CD8-positive, alpha-beta T cell (primary cell): ENCODE measurements at regions of chr12 and their contacts with region 1.

Region 1: DNA sequence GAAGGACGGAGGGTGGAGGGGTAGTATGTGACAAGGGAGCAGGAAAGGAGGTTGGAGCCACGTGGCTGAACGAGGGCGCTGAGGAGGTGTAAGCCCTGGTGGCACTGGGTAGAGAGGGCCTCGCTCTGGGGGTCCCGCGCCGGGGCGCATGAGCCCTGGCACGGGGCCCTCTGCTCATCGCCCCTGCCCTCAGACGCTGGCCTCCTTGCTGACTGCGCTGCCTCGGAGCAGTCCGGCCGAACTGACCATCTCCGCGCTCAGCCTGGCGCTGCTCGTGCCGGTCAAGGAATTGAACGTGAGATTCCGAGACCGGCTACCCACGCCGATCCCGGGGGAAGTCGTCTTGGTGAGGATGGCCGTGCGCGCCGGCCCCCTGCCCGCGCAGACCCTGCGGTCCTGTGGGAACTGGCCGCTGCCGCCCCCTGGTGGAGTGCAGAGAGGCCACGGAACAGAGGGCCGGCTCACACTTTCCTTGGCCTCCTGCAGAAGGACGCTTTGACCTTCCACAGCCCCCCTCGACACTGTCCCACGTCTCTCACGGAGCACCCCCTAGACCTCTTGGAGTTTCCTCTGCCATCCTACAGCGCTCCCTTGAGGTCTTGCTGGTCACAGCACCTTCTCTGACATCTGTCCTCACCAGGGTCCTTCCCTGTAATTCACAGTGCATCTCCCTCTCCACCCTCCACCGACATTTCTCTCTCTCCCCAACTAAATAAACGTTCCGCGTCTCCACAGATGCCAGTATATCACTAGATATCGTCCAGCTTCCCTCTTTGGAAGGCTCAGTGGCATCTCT is 10.5 kb downstream of the ARHGEF25 start:
- DNase-seq: peak in 8 of 9 experiments; percentile 41 to 80 (median 64)
- ATAC-seq: peak; percentile 66
- H3K4me3 ChIP-seq: peak overlapping the region; percentile 45 to 52
- H3K4me3 Mint-ChIP-seq: peak overlapping the region; percentile 82
- H3K27ac ChIP-seq: no peak overlapping the region
- H3K27ac Mint-ChIP-seq: no peak overlapping the region
- H3K4me1 ChIP-seq: peaks cover 30% of the 10 kb centered on the region
- H3K4me1 Mint-ChIP-seq: peaks cover 26% of the 10 kb centered on the region
- H3K27me3 ChIP-seq: peaks cover 71 to 75% of the 10 kb centered on the region in 2 experiments
- H3K27me3 Mint-ChIP-seq: peaks cover 93% of the 10 kb centered on the region
- CTCF ChIP-seq: peak; percentile 83

Region 2: DNA sequence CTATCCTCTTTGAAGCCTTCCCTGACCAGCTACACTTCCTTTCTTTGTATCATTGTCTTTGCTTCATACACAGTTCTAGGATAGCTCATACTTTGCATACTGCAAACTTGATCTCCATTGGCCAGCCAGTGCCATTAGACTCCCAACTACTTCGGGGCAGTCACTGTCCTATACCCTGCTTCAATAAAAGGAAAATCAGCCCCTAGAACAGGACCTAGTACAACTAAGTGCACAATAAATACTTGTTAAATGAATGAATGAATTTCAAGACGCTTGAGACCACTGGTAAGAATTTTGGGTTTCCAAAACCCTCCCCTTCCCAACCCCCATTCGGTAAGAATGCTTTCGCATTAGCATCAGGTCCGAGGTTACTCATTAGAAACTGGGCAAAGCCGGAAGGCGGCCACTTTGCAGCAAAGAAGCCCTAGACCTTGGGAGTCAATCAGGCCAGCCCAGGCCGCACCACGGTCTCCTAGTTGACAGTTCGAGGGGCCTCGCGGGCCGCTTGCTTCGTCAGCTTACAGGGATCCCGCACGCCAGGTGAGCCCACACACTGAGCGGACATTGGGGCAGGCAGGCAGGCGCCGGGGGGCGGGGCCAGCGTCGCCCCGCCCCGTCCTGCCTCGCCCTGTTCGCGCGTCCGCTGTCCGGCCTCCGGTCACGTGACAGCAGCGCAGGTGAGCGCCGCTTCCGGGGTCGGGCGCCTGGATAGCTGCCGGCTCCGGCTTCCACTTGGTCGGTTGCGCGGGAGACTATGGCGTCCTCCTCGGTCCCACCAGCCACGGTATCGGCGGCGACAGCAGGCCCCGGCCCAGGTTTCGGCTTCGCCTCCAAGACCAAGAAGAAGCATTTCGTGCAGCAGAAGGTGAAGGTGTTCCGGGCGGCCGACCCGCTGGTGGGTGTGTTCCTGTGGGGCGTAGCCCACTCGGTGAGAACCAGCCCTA is 30.9 kb before region 1 on chr12 and contains the start of gene PIP4K2C:
- CTCF ChIA-PET with region 1: interaction called, 34 read pairs
- POLR2A ChIA-PET with region 1: interaction called, 4 read pairs
- intact Hi-C with region 1: no loop called
- DNase-seq: peak; percentile 28 to 93 (median 74)
- ATAC-seq: peak; percentile 87
- H3K4me3 ChIP-seq: peak within 1 kb of the TSS; percentile 61 to 97
- H3K4me3 Mint-ChIP-seq: peak within 1 kb of the TSS; percentile 85
- H3K27ac ChIP-seq: peak within 1 kb of the TSS; percentile 55 to 79
- H3K27ac Mint-ChIP-seq: peak within 1 kb of the TSS; percentile 83
- H3K4me1 ChIP-seq: peaks cover 23% of the 10 kb centered on the region
- H3K4me1 Mint-ChIP-seq: peaks cover 32% of the 10 kb centered on the region
- H3K27me3 ChIP-seq: peaks cover 0 to 5% of the 10 kb centered on the region in 2 experiments
- H3K27me3 Mint-ChIP-seq: no peaks in the 10 kb centered on the region
- CTCF ChIP-seq: no peak
- total RNA-seq, gene PIP4K2C: 16.4 to 20.1 TPM

Region 3: GRCh38 chr12:57604454-57604991 is 17.2 kb before region 1 on chr12 and contains the start of gene DTX3:
- CTCF ChIA-PET with region 1: interaction called, 13 read pairs
- POLR2A ChIA-PET with region 1: interaction called, 5 read pairs
- intact Hi-C with region 1: no loop called
- DNase-seq: peak in 7 of 9 experiments; percentile 33 to 70 (median 51)
- ATAC-seq: peak; percentile 72
- H3K4me3 ChIP-seq: peak within 1 kb of the TSS; percentile 71 to 72
- H3K4me3 Mint-ChIP-seq: peak within 1 kb of the TSS; percentile 90
- H3K27ac ChIP-seq: peak within 1 kb of the TSS; percentile 52 to 73
- H3K27ac Mint-ChIP-seq: peak within 1 kb of the TSS; percentile 86
- H3K4me1 ChIP-seq: peaks cover 32% of the 10 kb centered on the region
- H3K4me1 Mint-ChIP-seq: peaks cover 30% of the 10 kb centered on the region
- H3K27me3 ChIP-seq: no peaks in the 10 kb centered on the region
- H3K27me3 Mint-ChIP-seq: no peaks in the 10 kb centered on the region
- CTCF ChIP-seq: no peak
- total RNA-seq, gene DTX3: 33.2 to 33.7 TPM

Region 4: DNA sequence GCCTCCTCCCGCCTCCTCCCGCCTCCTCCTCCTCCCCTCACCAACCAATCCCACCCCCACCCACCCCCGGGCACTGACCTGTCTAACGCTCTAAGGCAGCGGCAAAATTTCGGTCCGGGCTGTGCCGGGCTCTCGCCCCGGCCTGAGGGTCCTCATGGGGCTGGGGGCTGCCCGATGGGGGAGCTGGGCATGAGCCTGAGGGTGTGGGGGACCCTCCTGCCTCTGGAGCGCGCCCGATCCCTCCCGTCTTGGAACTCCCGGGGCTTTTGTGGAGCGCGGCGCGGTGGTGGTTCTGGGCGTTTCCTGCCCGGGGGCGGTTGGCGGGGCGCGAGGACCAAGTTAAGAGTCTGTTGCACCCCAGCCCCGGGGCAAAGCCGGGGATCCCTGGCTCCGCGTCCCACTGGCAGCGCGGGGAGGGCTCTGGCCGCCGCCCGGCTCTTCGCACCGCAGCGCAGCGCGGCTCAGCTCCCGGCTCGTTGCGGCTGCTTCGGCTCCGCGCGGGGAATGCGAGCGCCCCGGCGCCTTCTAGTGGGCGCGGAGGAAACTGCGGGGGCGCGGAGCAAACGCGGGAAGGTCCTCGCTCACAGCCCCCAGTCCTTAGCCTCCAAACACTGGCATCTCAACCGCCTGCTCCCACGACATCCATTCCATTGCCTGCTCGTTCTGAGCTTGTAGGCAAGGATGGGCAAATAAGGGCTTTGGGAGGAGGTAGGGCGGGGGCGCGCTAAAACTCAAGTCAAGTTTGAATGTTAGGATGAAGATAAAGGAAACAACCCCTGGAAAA is 11.2 kb after region 1 on chr12 and contains the start of gene B4GALNT1:
- CTCF ChIA-PET with region 1: interaction called, 25 read pairs
- POLR2A ChIA-PET with region 1: no interaction called
- intact Hi-C with region 1: no loop called
- DNase-seq: peak; percentile 39 to 79 (median 55)
- ATAC-seq: peak; percentile 92
- H3K4me3 ChIP-seq: peak within 1 kb of the TSS; percentile 50 to 57
- H3K4me3 Mint-ChIP-seq: peak within 1 kb of the TSS; percentile 71
- H3K27ac ChIP-seq: no peak within 1 kb of the TSS
- H3K27ac Mint-ChIP-seq: no peak within 1 kb of the TSS
- H3K4me1 ChIP-seq: peaks cover 13% of the 10 kb centered on the region
- H3K4me1 Mint-ChIP-seq: peaks cover 12% of the 10 kb centered on the region
- H3K27me3 ChIP-seq: peaks cover 10 to 28% of the 10 kb centered on the region in 2 experiments
- H3K27me3 Mint-ChIP-seq: peaks cover 53% of the 10 kb centered on the region
- CTCF ChIP-seq: peak; percentile 86
- total RNA-seq, gene B4GALNT1: not detected

Region 5: DNA sequence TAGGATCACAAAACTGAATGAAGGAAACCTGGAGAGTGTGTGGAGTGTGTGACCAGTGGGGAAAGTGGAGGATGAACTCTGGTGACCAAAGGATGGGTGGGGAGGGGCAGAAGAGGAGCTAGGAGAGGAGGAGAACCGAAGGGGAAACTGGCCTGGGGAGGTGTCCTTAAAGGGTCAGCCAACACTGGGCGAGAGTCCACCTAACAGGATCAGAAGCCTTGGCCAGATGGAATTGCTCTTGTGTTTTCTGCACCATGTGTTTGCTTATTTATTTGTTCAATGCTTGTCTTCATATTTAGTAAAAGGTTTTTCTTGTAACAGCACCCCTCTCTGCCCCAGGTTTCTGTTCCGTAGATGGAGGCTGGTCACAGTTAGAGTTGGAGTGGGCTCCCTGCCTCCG is 285.1 kb after region 1 on chr12:
- CTCF ChIA-PET with region 1: no interaction called
- POLR2A ChIA-PET with region 1: no interaction called
- intact Hi-C with region 1: no loop called
- DNase-seq: no peak
- ATAC-seq: no peak
- H3K4me3 ChIP-seq: no peak overlapping the region
- H3K4me3 Mint-ChIP-seq: no peak overlapping the region
- H3K27ac ChIP-seq: no peak overlapping the region
- H3K27ac Mint-ChIP-seq: no peak overlapping the region
- H3K4me1 ChIP-seq: peaks cover 3% of the 10 kb centered on the region
- H3K4me1 Mint-ChIP-seq: peaks cover 5% of the 10 kb centered on the region
- H3K27me3 ChIP-seq: peaks cover 0 to 2% of the 10 kb centered on the region in 2 experiments
- H3K27me3 Mint-ChIP-seq: peaks cover 5% of the 10 kb centered on the region
- CTCF ChIP-seq: no peak